Endothelial cell of umbilical vein (primary cell): ENCODE measurements at regions of chr10 and their contacts with region 1.

Region 1: GRCh38 chr10:13831711-13832141 is 245.0 kb downstream of the PRPF18 start:
- DNase-seq: peak; percentile 76
- H3K4me3 ChIP-seq: no peak overlapping the region
- H3K27ac ChIP-seq: peak overlapping the region; percentile 75
- H3K4me1 ChIP-seq: peaks cover 42% of the 10 kb centered on the region
- H3K27me3 ChIP-seq: no peaks in the 10 kb centered on the region
- CTCF ChIP-seq: no peak
- POLR2A ChIP-seq: no peak

Region 2: GRCh38 chr10:13820957-13821322 is 10.8 kb before region 1 on chr10:
- CTCF ChIA-PET with region 1: interaction called, 3 read pairs
- POLR2A ChIA-PET with region 1: no interaction called
- dilution Hi-C with region 1: no loop called
- intact Hi-C with region 1: loop called (anchors 1 kb)
- DNase-seq: no peak
- H3K4me3 ChIP-seq: no peak overlapping the region
- H3K27ac ChIP-seq: peak overlapping the region; percentile 22
- H3K4me1 ChIP-seq: peaks cover 28% of the 10 kb centered on the region
- H3K27me3 ChIP-seq: no peaks in the 10 kb centered on the region
- CTCF ChIP-seq: no peak
- POLR2A ChIP-seq: no peak

Region 3: DNA sequence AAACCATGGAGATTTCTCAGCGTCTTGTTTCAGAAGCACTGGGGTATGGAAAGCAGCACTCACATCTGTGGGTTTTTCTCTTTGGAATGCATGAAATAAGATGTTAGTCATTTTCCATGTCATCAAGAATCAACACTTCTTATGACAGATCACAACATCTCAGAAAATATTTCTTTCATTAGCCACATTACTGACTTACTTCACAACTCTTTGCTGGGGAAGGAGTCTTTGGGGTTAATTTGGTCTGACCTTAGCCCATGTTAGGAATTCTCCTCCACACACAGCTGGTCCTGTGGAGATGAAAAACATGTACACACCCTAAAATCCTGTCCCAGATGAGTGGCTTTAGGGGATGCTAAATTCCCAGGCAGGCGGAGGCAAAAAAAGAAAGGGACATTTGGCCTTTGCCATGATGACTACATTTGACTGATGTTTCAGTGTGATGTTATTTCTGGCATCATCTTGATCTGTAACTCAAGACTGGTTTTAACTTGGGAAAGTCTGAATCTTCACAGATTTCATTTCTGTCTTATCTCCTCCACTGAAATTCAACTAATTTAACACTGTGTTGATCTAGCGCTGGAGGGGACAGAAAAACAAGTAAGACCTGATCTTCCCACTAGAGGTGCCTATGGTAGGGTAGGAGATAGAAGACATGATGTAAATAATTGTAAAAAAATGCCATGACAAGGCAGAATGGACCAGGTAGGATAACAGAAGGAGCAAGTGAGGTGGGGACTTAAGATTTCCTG is 118.3 kb after region 1 on chr10:
- CTCF ChIA-PET with region 1: no interaction called
- POLR2A ChIA-PET with region 1: no interaction called
- dilution Hi-C with region 1: no loop called
- intact Hi-C with region 1: loop called (anchors 5 kb)
- DNase-seq: peak; percentile 22
- H3K4me3 ChIP-seq: no peak overlapping the region
- H3K27ac ChIP-seq: no peak overlapping the region
- H3K4me1 ChIP-seq: peaks cover 33% of the 10 kb centered on the region
- H3K27me3 ChIP-seq: no peaks in the 10 kb centered on the region
- CTCF ChIP-seq: no peak
- POLR2A ChIP-seq: no peak

Region 4: GRCh38 chr10:14116021-14116420 is 284.3 kb after region 1 on chr10:
- CTCF ChIA-PET with region 1: no interaction called
- POLR2A ChIA-PET with region 1: no interaction called
- dilution Hi-C with region 1: no loop called
- intact Hi-C with region 1: no loop called
- DNase-seq: no peak
- H3K4me3 ChIP-seq: no peak overlapping the region
- H3K27ac ChIP-seq: no peak overlapping the region
- H3K4me1 ChIP-seq: no peaks in the 10 kb centered on the region
- H3K27me3 ChIP-seq: peaks cover 3 to 11% of the 10 kb centered on the region in 2 experiments
- CTCF ChIP-seq: no peak
- POLR2A ChIP-seq: no peak